Activated CD4-positive, alpha-beta T cell treated with anti-CD3 and anti-CD28 coated beads, Interleukin-2, amount 10 ng/mL, durations not matched to agents 24 days and 14 days (primary cell): ENCODE measurements at regions of chr3 and their contacts with region 1.

Region 1: DNA sequence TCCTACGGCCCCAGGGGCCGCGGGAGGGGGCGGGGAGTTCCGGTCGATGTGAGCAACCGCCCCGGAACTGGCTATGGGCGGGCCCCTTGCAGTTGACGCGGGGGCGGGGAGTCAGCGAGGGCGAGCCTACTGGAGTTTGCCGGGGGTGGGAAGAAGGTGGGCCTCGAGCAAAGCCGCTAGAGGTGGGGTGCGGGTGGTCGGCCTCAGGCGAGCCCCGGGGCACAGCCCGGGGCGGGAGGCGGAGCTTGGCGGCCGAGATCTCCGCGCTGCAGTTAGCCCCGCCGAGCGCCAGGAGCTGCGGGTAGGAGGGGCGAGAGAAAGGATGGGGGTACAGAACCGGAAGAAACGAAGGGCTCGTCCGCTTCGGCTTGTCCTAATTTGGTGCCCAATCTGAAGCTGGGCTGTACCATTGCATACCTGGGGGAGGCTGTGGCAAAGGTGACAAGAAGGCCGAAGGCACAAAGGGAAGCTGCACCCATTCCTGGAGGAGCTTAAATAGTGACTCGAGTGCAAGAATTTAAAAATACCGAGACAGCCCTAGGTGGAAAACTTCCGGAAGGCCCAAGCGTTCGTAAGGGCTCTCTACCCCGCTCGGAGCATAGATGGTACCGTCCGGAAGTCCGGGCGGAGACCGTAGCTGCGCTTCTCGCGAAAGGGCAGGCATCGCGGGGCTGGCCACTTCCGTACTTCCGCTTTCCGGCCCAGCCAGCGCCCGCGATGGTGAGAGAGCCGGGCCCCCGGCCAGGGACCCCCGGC is at the starts of genes ARPC4 and TADA3:
- DNase-seq: peak; percentile 98
- H3K4me3 Mint-ChIP-seq: peak within 1 kb of the TSS; percentile 94
- H3K27ac Mint-ChIP-seq: peak within 1 kb of the TSS; percentile 100
- H3K4me1 Mint-ChIP-seq: peaks cover 47% of the 10 kb centered on the region
- H3K27me3 Mint-ChIP-seq: no peaks in the 10 kb centered on the region
- total RNA-seq, gene ARPC4: 263 and 267 TPM in 2 replicates
- total RNA-seq, gene TADA3: 63.4 and 64.6 TPM in 2 replicates

Region 2: GRCh38 chr3:9649791-9650521 is 142.6 kb before region 1 on chr3:
- intact Hi-C with region 1: loop called (anchors 1 kb)
- DNase-seq: peak; percentile 71
- H3K4me3 Mint-ChIP-seq: peak overlapping the region; percentile 99
- H3K27ac Mint-ChIP-seq: peak overlapping the region; percentile 92
- H3K4me1 Mint-ChIP-seq: peaks cover 17% of the 10 kb centered on the region
- H3K27me3 Mint-ChIP-seq: peaks cover 2% of the 10 kb centered on the region

Region 3: DNA sequence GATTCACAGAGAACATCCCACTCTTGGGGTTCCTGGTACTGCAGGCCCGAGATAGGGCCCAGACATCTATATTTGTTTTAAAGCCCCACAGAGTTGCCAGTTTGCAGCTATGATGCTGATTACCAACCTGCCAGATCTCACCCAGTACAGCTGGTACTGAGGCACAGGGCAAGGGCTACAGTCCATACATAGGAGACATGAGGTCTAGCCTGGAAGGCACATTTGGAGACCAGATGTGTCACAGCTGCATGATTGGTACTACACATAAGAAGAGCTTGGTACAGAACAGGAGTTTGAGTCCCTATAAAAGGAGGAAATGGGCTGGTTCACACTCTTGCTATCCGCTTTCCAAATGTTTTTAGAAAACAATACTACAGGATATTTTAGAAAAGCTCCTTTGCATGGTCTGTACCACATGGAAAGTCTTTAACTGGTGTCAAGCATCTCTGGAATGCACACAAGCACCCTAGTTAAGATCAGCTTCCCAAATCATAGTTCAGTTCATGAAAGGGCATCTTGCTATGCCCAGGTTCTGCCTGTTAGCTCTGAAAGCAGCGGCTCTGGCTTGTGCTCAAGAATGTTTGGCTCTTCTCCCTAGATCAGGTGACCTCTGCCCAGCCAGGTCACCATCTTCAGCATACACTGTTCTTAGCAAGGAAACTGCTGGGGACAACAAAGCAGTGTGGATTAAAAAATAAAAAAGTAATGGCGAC is 122.7 kb before region 1 on chr3:
- intact Hi-C with region 1: no loop called
- DNase-seq: no peak
- H3K4me3 Mint-ChIP-seq: no peak overlapping the region
- H3K27ac Mint-ChIP-seq: no peak overlapping the region
- H3K4me1 Mint-ChIP-seq: no peaks in the 10 kb centered on the region
- H3K27me3 Mint-ChIP-seq: no peaks in the 10 kb centered on the region

Region 4: DNA sequence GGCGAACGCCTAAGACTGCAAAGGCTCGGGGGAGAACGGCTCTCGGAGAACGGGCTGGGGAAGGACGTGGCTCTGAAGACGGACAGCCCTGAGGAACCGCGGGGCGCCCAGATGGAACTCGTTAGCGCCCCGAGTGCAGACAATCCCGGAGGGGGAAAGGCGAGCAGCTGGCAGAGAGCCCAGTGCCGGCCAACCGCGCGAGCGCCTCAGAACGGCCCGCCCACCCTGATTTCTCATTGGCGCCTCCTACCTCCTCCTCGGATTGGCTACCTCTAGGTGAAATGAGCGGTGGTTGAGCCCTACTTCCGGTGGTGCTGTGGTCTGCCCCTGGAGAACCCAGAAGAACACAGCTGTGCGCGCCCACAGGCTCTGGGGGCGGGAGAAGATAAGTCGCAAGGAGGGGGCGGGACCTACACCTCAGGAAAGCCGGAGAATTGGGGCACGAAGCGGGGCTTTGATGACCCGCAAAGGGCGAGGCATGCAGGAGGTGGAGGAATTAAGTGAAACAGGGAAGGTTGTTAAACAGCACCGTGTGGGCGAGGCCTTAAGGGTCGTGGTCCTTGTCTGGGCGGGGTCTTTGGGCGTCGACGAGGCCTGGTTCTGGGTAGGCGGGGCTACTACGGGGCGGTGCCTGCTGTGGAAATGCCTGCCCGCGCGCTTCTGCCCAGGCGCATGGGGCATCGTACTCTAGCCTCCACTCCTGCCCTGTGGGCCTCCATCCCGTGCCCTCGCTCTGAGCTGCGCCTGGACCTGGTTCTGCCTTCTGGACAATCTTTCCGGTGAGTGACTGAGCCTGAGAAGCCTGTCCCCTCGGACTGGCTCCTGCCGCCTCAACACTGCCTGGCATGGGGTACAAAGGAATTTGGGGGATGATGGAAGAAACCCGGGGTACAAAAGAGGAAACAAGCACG is 42.7 kb before region 1 on chr3 and contains the start of gene OGG1:
- intact Hi-C with region 1: loop called (anchors 1 kb)
- DNase-seq: peak; percentile 99
- H3K4me3 Mint-ChIP-seq: peak within 1 kb of the TSS; percentile 91
- H3K27ac Mint-ChIP-seq: peak within 1 kb of the TSS; percentile 96
- H3K4me1 Mint-ChIP-seq: peaks cover 50% of the 10 kb centered on the region
- H3K27me3 Mint-ChIP-seq: no peaks in the 10 kb centered on the region
- total RNA-seq, gene OGG1: 37.0 and 41.1 TPM in 2 replicates

Region 5: DNA sequence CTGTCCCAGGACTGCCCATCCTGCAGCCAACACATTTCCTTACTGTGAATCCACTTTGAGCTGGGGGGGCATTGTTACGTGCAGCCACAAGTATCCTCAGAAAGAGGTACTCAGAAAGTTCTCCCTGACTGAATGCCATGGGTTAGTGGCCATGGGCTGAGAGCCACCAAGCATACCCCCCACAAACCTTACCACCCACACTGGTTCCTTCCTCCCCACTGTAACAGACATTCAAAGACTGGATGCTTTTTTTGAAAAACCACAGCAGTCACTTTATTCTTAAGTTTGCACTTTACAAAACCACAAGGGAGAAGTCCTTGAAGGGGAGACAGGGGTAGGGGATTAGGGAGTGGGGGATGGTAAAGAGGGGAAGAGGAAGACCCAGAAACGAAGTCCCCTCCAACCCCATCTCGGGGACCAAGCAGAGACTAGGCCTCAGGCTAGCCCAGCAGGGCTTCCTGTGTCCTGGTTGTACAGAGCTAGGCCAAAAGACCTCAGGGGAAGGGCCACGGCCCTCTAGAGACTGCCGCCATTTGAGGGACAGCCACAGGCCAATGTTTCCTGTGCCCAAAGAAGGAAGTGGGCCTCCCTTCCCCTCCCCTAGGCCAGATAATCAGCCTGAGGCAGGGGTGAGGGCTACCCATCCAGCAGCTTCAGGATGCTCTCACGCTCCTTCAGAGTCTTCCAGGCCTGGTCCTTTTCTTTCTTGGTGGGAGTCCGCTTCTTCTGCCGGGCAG is 12.7 kb before region 1 on chr3:
- intact Hi-C with region 1: loop called (anchors 1 kb)
- DNase-seq: peak; percentile 81
- H3K4me3 Mint-ChIP-seq: peak overlapping the region; percentile 59
- H3K27ac Mint-ChIP-seq: peak overlapping the region; percentile 88
- H3K4me1 Mint-ChIP-seq: peaks cover 60% of the 10 kb centered on the region
- H3K27me3 Mint-ChIP-seq: no peaks in the 10 kb centered on the region

Region 6: DNA sequence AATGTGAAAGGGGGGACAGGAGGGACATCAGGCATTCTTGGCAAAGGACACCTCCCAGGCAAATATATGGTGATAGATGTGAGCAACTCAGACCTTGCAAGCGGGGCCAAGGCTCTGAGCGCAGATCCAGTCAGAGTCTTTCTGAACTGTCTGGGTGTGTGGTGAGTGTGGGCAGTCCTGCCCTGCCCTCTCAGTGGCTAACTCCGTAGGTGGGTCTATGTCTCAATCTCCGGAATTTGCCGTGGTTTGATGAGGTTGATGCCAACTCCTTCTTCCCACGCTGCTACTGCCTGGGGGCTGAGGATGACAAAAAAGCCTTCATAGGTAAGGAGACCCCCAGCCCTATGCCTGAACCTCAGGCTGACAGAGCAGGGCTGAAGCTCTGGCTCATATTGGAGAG is 24.9 kb after region 1 on chr3:
- intact Hi-C with region 1: no loop called
- DNase-seq: no peak
- H3K4me3 Mint-ChIP-seq: no peak overlapping the region
- H3K27ac Mint-ChIP-seq: no peak overlapping the region
- H3K4me1 Mint-ChIP-seq: peaks cover 5% of the 10 kb centered on the region
- H3K27me3 Mint-ChIP-seq: no peaks in the 10 kb centered on the region

Region 7: GRCh38 chr3:9843715-9844438 is 51.3 kb after region 1 on chr3 and contains the start of gene RPUSD3:
- intact Hi-C with region 1: loop called (anchors 1 kb)
- DNase-seq: peak; percentile 99
- H3K4me3 Mint-ChIP-seq: peak within 1 kb of the TSS; percentile 99
- H3K27ac Mint-ChIP-seq: peak within 1 kb of the TSS; percentile 98
- H3K4me1 Mint-ChIP-seq: peaks cover 26% of the 10 kb centered on the region
- H3K27me3 Mint-ChIP-seq: no peaks in the 10 kb centered on the region
- total RNA-seq, gene RPUSD3: 84.3 and 85.7 TPM in 2 replicates

Region 8: DNA sequence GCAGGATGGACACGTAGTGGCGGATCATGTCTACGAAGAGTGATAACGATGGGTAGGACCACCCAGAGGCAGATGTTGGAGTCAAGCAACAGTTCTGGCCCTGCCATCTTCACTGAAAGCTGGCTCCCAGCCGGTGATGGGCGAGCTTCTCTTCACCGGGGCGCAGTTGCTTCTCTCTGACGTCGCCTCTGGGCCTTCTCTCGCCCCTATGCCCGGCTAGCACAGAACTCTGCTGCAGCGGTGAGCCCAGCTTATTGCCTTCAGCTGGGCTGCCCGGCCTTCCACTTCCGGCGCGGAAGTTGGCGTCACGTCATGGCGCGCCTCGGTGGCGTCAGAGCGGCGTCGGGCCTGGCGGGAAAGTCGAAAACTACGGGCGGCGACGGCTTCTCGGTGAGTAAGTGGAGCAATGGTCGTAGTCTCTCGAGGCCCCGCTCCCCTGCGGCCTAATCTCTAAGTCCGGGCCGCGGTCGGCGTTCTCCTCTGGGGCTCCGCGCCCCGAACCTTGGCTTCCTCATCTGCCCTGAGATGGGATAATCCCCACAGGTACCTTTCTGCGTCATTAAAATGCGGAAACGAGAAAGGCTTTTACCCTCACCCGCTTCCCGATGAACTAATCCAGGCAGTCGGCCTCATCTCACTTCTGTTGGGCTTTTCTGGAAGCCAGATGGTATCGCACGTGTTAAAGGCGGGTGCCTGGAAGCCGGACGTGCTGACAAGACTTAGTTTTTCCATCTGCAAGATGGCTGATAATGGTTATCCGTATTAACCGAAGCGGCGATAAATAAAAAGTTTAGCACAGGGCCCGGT is 233.7 kb after region 1 on chr3 and contains the start of gene FANCD2:
- intact Hi-C with region 1: no loop called
- DNase-seq: peak; percentile 99
- H3K4me3 Mint-ChIP-seq: peak within 1 kb of the TSS; percentile 93
- H3K27ac Mint-ChIP-seq: peak within 1 kb of the TSS; percentile 98
- H3K4me1 Mint-ChIP-seq: peaks cover 18% of the 10 kb centered on the region
- H3K27me3 Mint-ChIP-seq: no peaks in the 10 kb centered on the region
- total RNA-seq, gene FANCD2: 71.4 and 73.8 TPM in 2 replicates

Region 9: GRCh38 chr3:10115326-10116137 is 322.9 kb after region 1 on chr3 and contains the start of gene BRK1:
- intact Hi-C with region 1: loop called (anchors 2 kb)
- DNase-seq: peak; percentile 97
- H3K4me3 Mint-ChIP-seq: peak within 1 kb of the TSS; percentile 98
- H3K27ac Mint-ChIP-seq: peak within 1 kb of the TSS; percentile 93
- H3K4me1 Mint-ChIP-seq: peaks cover 25% of the 10 kb centered on the region
- H3K27me3 Mint-ChIP-seq: peaks cover 2% of the 10 kb centered on the region
- total RNA-seq, gene BRK1: 98.8 and 99.6 TPM in 2 replicates